CD8-positive, alpha-beta T cell (primary cell): ENCODE measurements at regions of chr12 and their contacts with region 1.

Region 1: DNA sequence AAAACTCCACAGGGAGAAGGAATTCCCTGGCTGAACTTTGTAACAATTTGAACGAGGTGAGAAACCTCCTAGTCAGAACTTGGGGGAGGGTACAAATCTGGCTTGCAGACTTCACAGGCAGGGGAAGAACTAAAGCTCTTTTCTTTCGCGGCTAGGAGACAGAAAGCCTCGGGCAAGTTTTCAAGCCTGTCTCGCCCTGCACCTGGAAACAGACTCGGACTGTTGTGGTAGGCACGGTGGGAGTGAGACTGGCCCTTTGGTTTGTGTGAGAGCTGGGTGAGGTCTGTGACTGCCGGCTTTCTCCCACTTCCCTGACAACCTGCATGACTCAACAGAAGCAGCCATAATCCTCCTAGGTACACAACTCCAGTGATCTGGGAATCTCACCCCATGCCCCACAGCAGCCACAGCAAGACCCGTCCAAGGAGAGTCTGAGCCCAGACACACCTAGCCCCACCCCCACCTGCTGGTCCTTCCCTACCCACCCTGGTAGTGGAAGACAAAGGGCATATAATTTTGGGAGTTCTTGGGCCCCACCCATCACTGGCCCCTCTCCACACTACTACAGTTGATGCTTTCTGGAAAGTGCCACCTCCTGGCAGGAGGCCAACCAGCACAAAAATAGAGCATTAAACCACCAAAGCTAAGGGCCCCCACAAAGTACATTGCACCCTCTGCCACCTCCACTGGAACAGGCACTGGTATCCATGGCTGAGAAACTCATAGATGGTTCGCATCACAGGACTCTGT is 102.7 kb upstream of the ST8SIA1 start:
- DNase-seq: no peak
- ATAC-seq: no peak
- H3K4me3 ChIP-seq: no peak overlapping the region
- H3K4me3 Mint-ChIP-seq: no peak overlapping the region
- H3K27ac ChIP-seq: no peak overlapping the region
- H3K27ac Mint-ChIP-seq: no peak overlapping the region
- H3K4me1 ChIP-seq: no peaks in the 10 kb centered on the region
- H3K4me1 Mint-ChIP-seq: no peaks in the 10 kb centered on the region
- H3K27me3 ChIP-seq: no peaks in the 10 kb centered on the region
- H3K27me3 Mint-ChIP-seq: no peaks in the 10 kb centered on the region
- CTCF ChIP-seq: no peak

Region 2: DNA sequence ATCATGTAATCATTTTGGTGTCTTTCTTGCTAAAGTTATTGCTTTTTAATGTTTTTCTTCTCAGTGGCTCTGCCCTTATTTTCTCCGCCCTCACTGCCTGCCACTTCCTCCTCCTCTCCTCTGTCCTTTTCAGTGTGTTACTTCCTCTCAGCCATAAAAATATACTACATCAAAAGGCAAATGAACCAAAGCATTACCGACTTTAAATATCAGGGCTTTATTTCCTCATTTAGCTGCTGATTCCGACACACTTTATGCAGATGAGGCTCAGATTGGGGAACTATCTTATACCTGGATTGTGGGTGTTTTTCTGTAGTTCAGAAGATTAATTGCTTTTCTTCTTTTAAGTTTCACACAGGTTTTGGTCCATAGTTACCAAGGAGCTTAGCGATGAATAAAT is 273.1 kb before region 1 on chr12:
- CTCF ChIA-PET with region 1: no interaction called
- POLR2A ChIA-PET with region 1: no interaction called
- intact Hi-C with region 1: loop called in 1 of 2 experiments (anchors 10 kb)
- DNase-seq: peak in 2 of 9 experiments; percentile 21 to 54
- ATAC-seq: peak; percentile 71
- H3K4me3 ChIP-seq: peak overlapping the region in 1 of 2 experiments; percentile 41
- H3K4me3 Mint-ChIP-seq: peak overlapping the region; percentile 53
- H3K27ac ChIP-seq: peak overlapping the region; percentile 28 to 59
- H3K27ac Mint-ChIP-seq: peak overlapping the region; percentile 66
- H3K4me1 ChIP-seq: peaks cover 41% of the 10 kb centered on the region
- H3K4me1 Mint-ChIP-seq: peaks cover 48% of the 10 kb centered on the region
- H3K27me3 ChIP-seq: no peaks in the 10 kb centered on the region
- H3K27me3 Mint-ChIP-seq: no peaks in the 10 kb centered on the region
- CTCF ChIP-seq: no peak

Region 3: GRCh38 chr12:22238211-22238610 is 199.0 kb before region 1 on chr12:
- CTCF ChIA-PET with region 1: no interaction called
- POLR2A ChIA-PET with region 1: no interaction called
- intact Hi-C with region 1: no loop called
- DNase-seq: no peak
- ATAC-seq: no peak
- H3K4me3 ChIP-seq: no peak overlapping the region
- H3K4me3 Mint-ChIP-seq: no peak overlapping the region
- H3K27ac ChIP-seq: no peak overlapping the region
- H3K27ac Mint-ChIP-seq: no peak overlapping the region
- H3K4me1 ChIP-seq: no peaks in the 10 kb centered on the region
- H3K4me1 Mint-ChIP-seq: no peaks in the 10 kb centered on the region
- H3K27me3 ChIP-seq: no peaks in the 10 kb centered on the region
- H3K27me3 Mint-ChIP-seq: no peaks in the 10 kb centered on the region
- CTCF ChIP-seq: no peak

Region 4: GRCh38 chr12:22262309-22262708 is 174.9 kb before region 1 on chr12:
- CTCF ChIA-PET with region 1: no interaction called
- POLR2A ChIA-PET with region 1: no interaction called
- intact Hi-C with region 1: loop called in 1 of 2 experiments (anchors 10 kb)
- DNase-seq: no peak
- ATAC-seq: no peak
- H3K4me3 ChIP-seq: no peak overlapping the region
- H3K4me3 Mint-ChIP-seq: no peak overlapping the region
- H3K27ac ChIP-seq: no peak overlapping the region
- H3K27ac Mint-ChIP-seq: no peak overlapping the region
- H3K4me1 ChIP-seq: no peaks in the 10 kb centered on the region
- H3K4me1 Mint-ChIP-seq: peaks cover 2% of the 10 kb centered on the region
- H3K27me3 ChIP-seq: no peaks in the 10 kb centered on the region
- H3K27me3 Mint-ChIP-seq: no peaks in the 10 kb centered on the region
- CTCF ChIP-seq: no peak